ENCODE measurements at regions of chr12 and their contacts with region 1.

Region 1: DNA sequence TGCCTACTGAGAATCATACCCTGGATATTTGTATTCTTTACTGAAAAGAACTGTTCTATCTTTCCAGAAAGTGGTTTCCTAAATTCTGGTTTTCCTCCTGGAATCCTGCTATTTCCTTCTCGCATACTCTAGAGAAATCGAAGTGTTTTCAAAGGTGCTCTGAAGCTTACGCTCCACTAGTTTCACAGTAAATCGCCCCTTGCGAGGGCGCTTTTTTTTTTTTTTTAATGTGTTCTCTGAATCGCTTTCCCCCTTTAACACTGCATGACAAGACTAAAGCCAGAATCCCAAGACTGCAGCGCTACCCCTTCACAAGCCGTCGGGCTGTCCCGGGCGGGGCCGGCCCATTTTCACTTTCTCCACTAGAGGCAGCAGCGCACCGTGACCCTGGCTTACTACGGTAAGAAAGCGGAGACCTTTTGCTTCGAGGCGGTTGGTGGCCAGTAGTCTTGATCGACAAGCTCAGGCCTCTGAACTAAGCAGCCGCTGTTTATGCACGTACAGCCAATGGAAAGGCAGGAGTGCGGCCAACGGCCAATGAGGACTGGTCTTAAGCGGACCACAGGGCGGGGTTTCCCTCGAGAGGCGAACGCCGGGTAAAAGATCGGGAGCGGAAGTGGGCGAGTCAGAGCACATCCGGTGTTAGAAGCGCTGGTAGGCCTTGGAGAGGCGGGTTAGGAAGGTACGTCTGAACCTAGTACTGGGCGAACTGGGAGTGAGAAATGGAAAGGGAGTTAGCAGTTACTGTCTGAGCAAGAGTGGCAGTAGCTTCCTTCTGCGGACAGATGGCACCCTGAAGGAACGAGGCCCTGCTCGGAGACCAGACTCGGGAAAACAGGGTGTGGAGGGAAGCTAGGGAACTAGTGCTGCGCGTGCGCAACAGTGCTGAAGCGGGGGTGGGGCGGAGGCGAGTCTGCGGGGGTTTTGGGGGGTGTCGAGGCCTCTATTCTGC is at the start of gene TMBIM6:
- DNase-seq: peak; percentile 98
- ATAC-seq: peak; percentile 99
- H3K4me3 Mint-ChIP-seq: peak within 1 kb of the TSS; percentile 92
- H3K27ac Mint-ChIP-seq: peak within 1 kb of the TSS; percentile 98
- H3K4me1 Mint-ChIP-seq: peaks cover 21% of the 10 kb centered on the region
- H3K27me3 Mint-ChIP-seq: no peaks in the 10 kb centered on the region; the same call in 1 of the 2 replicates
- CTCF ChIP-seq: peak; percentile 79
- total RNA-seq, gene TMBIM6: 402 to 417 TPM (median 412 TPM) in 3 replicates

Region 2: DNA sequence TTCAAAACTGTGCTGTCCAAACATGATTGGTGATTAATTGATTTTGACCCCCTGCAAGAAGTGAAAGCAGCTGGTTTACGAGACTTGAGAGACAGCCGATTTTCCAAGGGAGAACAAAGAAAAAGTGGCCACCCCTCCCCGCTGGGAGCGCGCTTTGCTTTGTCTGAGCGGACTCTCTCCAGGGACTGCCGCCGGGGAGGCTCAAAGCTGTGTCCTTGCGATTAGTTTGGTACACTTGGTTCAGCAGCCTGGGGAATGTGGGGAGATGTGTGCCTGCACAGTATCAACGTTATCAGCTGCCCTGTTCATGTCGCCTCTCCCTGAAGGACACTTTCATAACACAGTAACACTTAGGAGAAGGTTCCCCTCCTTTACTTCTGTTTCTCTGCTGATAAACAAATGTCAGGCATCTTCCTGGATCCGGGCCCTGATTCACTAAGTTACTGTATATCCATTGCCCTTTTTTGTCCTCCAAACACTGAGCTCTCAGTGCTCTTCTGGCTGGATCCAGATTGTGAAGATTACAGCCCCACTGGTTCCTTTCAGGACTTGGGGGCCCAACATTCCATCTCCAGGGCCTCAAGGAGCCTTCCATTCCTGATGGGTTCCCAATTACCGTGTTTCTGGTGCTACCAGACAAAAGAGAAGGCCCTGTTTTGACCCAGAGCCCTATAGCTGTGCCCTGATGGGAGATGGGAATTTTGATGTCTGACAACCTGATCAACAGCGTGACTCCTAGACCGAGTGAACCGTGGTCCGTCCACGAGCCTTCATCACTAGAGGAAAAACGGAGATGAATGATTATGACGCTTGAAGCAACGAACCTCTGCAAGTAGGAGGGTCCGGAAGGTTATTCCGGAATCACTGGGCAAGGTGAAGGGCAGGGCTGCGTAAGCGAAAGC is 508.0 kb before region 1 on chr12:
- CTCF ChIA-PET with region 1: no interaction called
- POLR2A ChIA-PET with region 1: no interaction called
- DNase-seq: peak; percentile 62
- ATAC-seq: peak; percentile 34
- H3K4me3 Mint-ChIP-seq: peak overlapping the region; percentile 38
- H3K27ac Mint-ChIP-seq: no peak overlapping the region
- H3K4me1 Mint-ChIP-seq: peaks cover 27% of the 10 kb centered on the region
- H3K27me3 Mint-ChIP-seq: peaks cover 6% of the 10 kb centered on the region; the same call in 1 of the 2 replicates
- CTCF ChIP-seq: no peak

Region 3: DNA sequence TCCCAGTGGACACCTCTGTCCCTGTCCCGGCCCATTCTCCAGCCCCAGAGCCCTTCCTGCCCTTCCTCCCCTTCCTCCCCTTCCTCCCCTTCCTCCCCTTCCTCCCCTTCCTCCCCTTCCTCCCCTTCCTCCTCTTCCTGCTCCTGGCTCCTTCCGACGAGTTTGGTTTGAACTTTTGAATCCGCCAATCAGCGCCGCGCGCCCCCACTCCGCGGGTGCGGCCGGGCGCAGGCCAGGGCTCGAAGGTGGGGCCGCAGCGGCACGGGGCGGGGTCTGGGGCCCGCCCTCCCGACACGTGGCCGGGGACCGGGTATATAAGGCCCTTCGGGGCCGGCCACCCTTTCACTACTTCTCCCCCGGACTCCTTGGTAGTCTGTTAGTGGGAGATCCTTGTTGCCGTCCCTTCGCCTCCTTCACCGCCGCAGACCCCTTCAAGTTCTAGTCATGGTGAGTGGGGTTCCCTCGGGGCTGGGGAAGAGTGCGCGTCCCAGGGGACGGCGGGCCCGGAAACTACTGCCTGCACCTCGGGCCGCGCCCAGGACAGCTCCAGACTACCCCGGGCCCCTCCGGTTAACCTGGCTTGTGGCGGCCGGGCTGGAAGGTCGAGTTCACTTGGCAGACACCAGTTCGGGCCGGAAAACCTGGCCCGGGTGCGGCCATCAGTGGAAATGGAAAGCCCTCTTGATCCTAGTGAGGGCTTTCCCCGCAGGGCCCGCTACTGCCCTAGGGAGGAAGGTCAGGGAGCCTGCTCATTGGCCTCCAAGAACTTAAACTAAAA is 476.3 kb before region 1 on chr12 and contains the start of gene TUBA1C:
- CTCF ChIA-PET with region 1: no interaction called
- POLR2A ChIA-PET with region 1: no interaction called
- DNase-seq: peak; percentile 94
- ATAC-seq: peak; percentile 92
- H3K4me3 Mint-ChIP-seq: peak within 1 kb of the TSS; percentile 95
- H3K27ac Mint-ChIP-seq: peak within 1 kb of the TSS; percentile 93
- H3K4me1 Mint-ChIP-seq: peaks cover 31% of the 10 kb centered on the region
- H3K27me3 Mint-ChIP-seq: no peaks in the 10 kb centered on the region; the same call in 1 of the 2 replicates
- CTCF ChIP-seq: no peak
- total RNA-seq, gene TUBA1C: 458 to 540 TPM (median 478 TPM) in 3 replicates

Region 4: GRCh38 chr12:49503674-49504180 is 237.5 kb before region 1 on chr12:
- CTCF ChIA-PET with region 1: no interaction called
- POLR2A ChIA-PET with region 1: no interaction called
- DNase-seq: no peak
- ATAC-seq: no peak
- H3K4me3 Mint-ChIP-seq: no peak overlapping the region
- H3K27ac Mint-ChIP-seq: no peak overlapping the region
- H3K4me1 Mint-ChIP-seq: no peaks in the 10 kb centered on the region
- H3K27me3 Mint-ChIP-seq: no peaks in the 10 kb centered on the region
- CTCF ChIP-seq: no peak

Region 5: GRCh38 chr12:49636979-49637755 is 104.0 kb before region 1 on chr12:
- CTCF ChIA-PET with region 1: interaction called, 39 read pairs
- POLR2A ChIA-PET with region 1: interaction called, 3 read pairs
- DNase-seq: peak; percentile 63
- ATAC-seq: peak; percentile 86
- H3K4me3 Mint-ChIP-seq: peak overlapping the region; percentile 15; the same call in 1 of the 2 replicates
- H3K27ac Mint-ChIP-seq: peak overlapping the region; percentile 96
- H3K4me1 Mint-ChIP-seq: peaks cover 21% of the 10 kb centered on the region
- H3K27me3 Mint-ChIP-seq: no peaks in the 10 kb centered on the region
- CTCF ChIP-seq: 0 out of 2 replicates have a peak, but pooled peaks have one; percentile 23

Region 6: GRCh38 chr12:49662998-49663843 is 78.0 kb before region 1 on chr12:
- CTCF ChIA-PET with region 1: interaction called, 19 read pairs
- POLR2A ChIA-PET with region 1: interaction called, 4 read pairs
- DNase-seq: peak; percentile 40
- ATAC-seq: peak; percentile 94
- H3K4me3 Mint-ChIP-seq: no peak overlapping the region
- H3K27ac Mint-ChIP-seq: peak overlapping the region; percentile 95
- H3K4me1 Mint-ChIP-seq: peaks cover 23% of the 10 kb centered on the region
- H3K27me3 Mint-ChIP-seq: no peaks in the 10 kb centered on the region
- CTCF ChIP-seq: no peak

Region 7: DNA sequence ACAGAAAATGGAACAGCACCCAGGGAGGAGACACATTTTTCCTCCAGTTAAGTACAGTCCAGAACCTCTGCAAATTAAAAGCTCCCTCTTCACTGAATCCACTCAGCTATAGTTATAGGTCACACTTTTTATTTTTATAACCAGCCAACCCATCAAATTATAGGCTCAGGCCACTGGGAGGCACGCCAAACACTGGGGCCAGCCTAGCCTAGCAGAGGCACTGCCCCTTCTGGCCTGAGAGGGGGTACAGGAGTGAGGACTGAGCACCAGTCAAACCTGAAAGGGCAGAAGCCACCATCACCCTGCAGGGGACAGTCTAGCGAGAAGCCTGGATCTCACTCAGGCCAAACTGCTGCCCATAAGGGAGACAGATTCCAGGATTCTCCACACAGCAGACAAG is 53.3 kb before region 1 on chr12:
- CTCF ChIA-PET with region 1: interaction called, 18 read pairs
- POLR2A ChIA-PET with region 1: no interaction called
- DNase-seq: peak; percentile 36
- ATAC-seq: peak; percentile 97
- H3K4me3 Mint-ChIP-seq: no peak overlapping the region
- H3K27ac Mint-ChIP-seq: no peak overlapping the region
- H3K4me1 Mint-ChIP-seq: peaks cover 21% of the 10 kb centered on the region
- H3K27me3 Mint-ChIP-seq: no peaks in the 10 kb centered on the region
- CTCF ChIP-seq: no peak

Region 8: DNA sequence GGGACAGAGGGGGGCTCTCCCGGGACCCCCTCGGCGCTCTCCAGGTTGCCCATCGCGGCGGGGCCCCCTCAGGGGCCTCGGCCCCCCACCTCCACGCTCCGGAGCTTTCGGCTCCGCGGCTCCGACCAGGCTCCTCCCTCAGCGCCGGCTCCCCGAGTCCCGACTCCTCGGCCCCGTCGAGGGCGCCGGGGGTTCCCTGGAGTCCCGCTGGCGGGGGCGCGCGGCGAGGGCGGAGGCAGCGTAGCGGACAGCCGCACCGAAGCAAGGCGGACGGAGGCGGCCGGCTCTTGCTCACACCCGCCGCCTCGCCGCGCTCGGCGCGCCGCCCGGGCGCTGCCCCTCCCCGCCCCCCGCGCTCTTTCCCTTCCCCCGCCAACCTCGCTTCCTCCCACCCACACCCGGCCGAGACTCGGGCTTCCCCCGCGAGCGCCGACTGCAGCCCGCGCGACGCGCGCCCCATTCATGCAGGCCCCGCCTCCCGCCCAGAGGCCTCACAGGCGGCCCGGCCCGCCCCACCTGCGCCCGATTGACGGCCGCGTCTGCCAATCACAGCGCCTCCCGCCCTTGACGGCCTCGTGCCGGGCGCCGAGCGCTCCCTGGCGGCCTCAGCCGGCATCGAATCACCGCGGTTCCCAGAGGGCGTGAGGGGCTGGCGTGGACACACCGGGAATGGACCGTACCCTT is 33.9 kb before region 1 on chr12 and contains the start of gene FMNL3:
- CTCF ChIA-PET with region 1: interaction called, 20 read pairs
- POLR2A ChIA-PET with region 1: interaction called, 3 read pairs
- DNase-seq: peak; percentile 97
- ATAC-seq: peak; percentile 86
- H3K4me3 Mint-ChIP-seq: peak within 1 kb of the TSS; percentile 89
- H3K27ac Mint-ChIP-seq: no peak within 1 kb of the TSS
- H3K4me1 Mint-ChIP-seq: peaks cover 38% of the 10 kb centered on the region
- H3K27me3 Mint-ChIP-seq: peaks cover 45% of the 10 kb centered on the region
- CTCF ChIP-seq: peak; percentile 74
- total RNA-seq, gene FMNL3: 15.2 to 19.3 TPM (median 15.6 TPM) in 3 replicates

Region 9: DNA sequence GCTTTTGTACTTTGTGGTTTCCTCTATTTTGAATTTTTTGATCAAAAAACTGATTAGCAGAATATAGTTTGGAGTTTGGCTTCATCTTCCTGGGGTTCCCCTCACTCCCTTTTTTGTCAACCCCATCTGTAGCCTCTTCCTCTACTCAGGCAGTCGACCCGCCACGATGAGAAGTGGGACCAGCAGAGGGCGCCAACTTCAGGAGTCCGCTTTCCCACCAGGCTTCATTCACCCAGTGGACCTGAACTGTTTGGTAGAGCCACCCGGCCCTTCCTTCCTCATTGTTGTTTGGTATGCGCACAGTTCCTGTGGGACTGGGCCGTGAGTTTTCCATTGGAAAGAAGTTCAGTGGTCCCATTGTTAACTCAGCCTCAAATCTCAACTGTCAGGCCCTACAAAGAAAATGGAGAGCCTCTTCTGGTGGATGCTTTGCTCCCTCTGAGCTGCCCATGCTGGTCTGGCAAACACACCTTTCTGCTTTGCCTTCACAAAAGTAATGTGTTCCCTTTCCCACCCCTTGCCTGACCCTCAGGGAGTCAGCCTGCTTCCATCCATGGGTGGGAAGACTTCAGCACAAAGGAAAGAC is 21.9 kb after region 1 on chr12:
- CTCF ChIA-PET with region 1: interaction called, 30 read pairs
- POLR2A ChIA-PET with region 1: interaction called, 6 read pairs
- DNase-seq: peak; percentile 88
- ATAC-seq: peak; percentile 80
- H3K4me3 Mint-ChIP-seq: no peak overlapping the region
- H3K27ac Mint-ChIP-seq: peak overlapping the region; percentile 39; the same call in 1 of the 2 replicates
- H3K4me1 Mint-ChIP-seq: peaks cover 7% of the 10 kb centered on the region
- H3K27me3 Mint-ChIP-seq: no peaks in the 10 kb centered on the region
- CTCF ChIP-seq: peak; percentile 75

Region 10: GRCh38 chr12:49828133-49829091 is 87.2 kb after region 1 on chr12 and contains the start of gene NCKAP5L:
- CTCF ChIA-PET with region 1: interaction called, 16 read pairs
- POLR2A ChIA-PET with region 1: interaction called, 5 read pairs
- DNase-seq: peak; percentile 97
- ATAC-seq: peak; percentile 89
- H3K4me3 Mint-ChIP-seq: peak within 1 kb of the TSS; percentile 93
- H3K27ac Mint-ChIP-seq: peak within 1 kb of the TSS; percentile 100
- H3K4me1 Mint-ChIP-seq: peaks cover 33% of the 10 kb centered on the region
- H3K27me3 Mint-ChIP-seq: no peaks in the 10 kb centered on the region; the same call in 1 of the 2 replicates
- CTCF ChIP-seq: no peak
- total RNA-seq, gene NCKAP5L: 22.1 to 27.8 TPM (median 22.4 TPM) in 3 replicates

Region 11: GRCh38 chr12:49855005-49855404 is 113.8 kb after region 1 on chr12:
- CTCF ChIA-PET with region 1: no interaction called
- POLR2A ChIA-PET with region 1: no interaction called
- DNase-seq: no peak
- ATAC-seq: no peak
- H3K4me3 Mint-ChIP-seq: no peak overlapping the region
- H3K27ac Mint-ChIP-seq: 0 out of 2 replicates have a peak overlapping the region, but pooled peaks have one; percentile 54
- H3K4me1 Mint-ChIP-seq: peaks cover 4% of the 10 kb centered on the region; the same call in 1 of the 2 replicates
- H3K27me3 Mint-ChIP-seq: peaks cover 27% of the 10 kb centered on the region
- CTCF ChIP-seq: no peak

Measured in WTC11 (cell line).